ENCODE measurements at regions of chr11 and their contacts with region 1.

Region 1: GRCh38 chr11:67685641-67686495 is 11.4 kb upstream of the ALDH3B2 start:
- DNase-seq: no peak
- H3K4me3 ChIP-seq: no peak overlapping the region
- H3K27ac ChIP-seq: no peak overlapping the region
- H3K4me1 ChIP-seq: peaks cover 48% of the 10 kb centered on the region
- H3K27me3 ChIP-seq: no peaks in the 10 kb centered on the region
- CTCF ChIP-seq: no peak

Region 2: GRCh38 chr11:66906061-66906735 is 779.7 kb before region 1 on chr11:
- CTCF ChIA-PET with region 1: no interaction called
- POLR2A ChIA-PET with region 1: no interaction called
- intact Hi-C with region 1: no loop called
- DNase-seq: peak in 1 of 2 experiments; percentile 39
- H3K4me3 ChIP-seq: no peak overlapping the region
- H3K27ac ChIP-seq: no peak overlapping the region
- H3K4me1 ChIP-seq: peaks cover 34% of the 10 kb centered on the region
- H3K27me3 ChIP-seq: no peaks in the 10 kb centered on the region
- CTCF ChIP-seq: no peak

Region 3: GRCh38 chr11:67500831-67501715 is 184.8 kb before region 1 on chr11:
- CTCF ChIA-PET with region 1: no interaction called
- POLR2A ChIA-PET with region 1: no interaction called
- intact Hi-C with region 1: no loop called
- DNase-seq: no peak
- H3K4me3 ChIP-seq: no peak overlapping the region
- H3K27ac ChIP-seq: no peak overlapping the region
- H3K4me1 ChIP-seq: peaks cover 18% of the 10 kb centered on the region
- H3K27me3 ChIP-seq: no peaks in the 10 kb centered on the region
- CTCF ChIP-seq: no peak

Region 4: GRCh38 chr11:67705264-67705663 is 19.4 kb after region 1 on chr11:
- CTCF ChIA-PET with region 1: no interaction called
- POLR2A ChIA-PET with region 1: interaction called, 11 read pairs
- intact Hi-C with region 1: no loop called
- DNase-seq: no peak
- H3K4me3 ChIP-seq: no peak overlapping the region
- H3K27ac ChIP-seq: no peak overlapping the region
- H3K4me1 ChIP-seq: peaks cover 44% of the 10 kb centered on the region
- H3K27me3 ChIP-seq: no peaks in the 10 kb centered on the region
- CTCF ChIP-seq: no peak

Region 5: GRCh38 chr11:68113986-68114385 is 428.1 kb after region 1 on chr11:
- CTCF ChIA-PET with region 1: no interaction called
- POLR2A ChIA-PET with region 1: no interaction called
- intact Hi-C with region 1: no loop called
- DNase-seq: no peak
- H3K4me3 ChIP-seq: no peak overlapping the region
- H3K27ac ChIP-seq: no peak overlapping the region
- H3K4me1 ChIP-seq: peaks cover 40% of the 10 kb centered on the region
- H3K27me3 ChIP-seq: no peaks in the 10 kb centered on the region
- CTCF ChIP-seq: no peak

Measured in PC-9 (cell line).